Activated CD4-positive, alpha-beta memory T cell treated with anti-CD3 and anti-CD28 coated beads, Interleukin-2, amount 10 ng/mL, durations not matched to agents 7 days and 5 days (primary cell): ENCODE measurements at regions of chr11 and their contacts with region 1.

Region 1: GRCh38 chr11:66438504-66439466 is at the start of gene MRPL11:
- DNase-seq: peak; percentile 91
- H3K4me3 Mint-ChIP-seq: peak within 1 kb of the TSS; percentile 88
- H3K27ac Mint-ChIP-seq: peak within 1 kb of the TSS; percentile 89
- H3K4me1 Mint-ChIP-seq: peaks cover 24% of the 10 kb centered on the region
- H3K27me3 Mint-ChIP-seq: no peaks in the 10 kb centered on the region
- total RNA-seq, gene MRPL11: 44.2 to 55.3 TPM

Region 2: GRCh38 chr11:66386171-66387069 is 52.4 kb before region 1 on chr11:
- CTCF ChIA-PET with region 1: interaction called, 14 read pairs
- POLR2A ChIA-PET with region 1: no interaction called
- DNase-seq: peak; percentile 83
- H3K4me3 Mint-ChIP-seq: peak overlapping the region; percentile 12
- H3K27ac Mint-ChIP-seq: no peak overlapping the region
- H3K4me1 Mint-ChIP-seq: peaks cover 6% of the 10 kb centered on the region
- H3K27me3 Mint-ChIP-seq: peaks cover 7% of the 10 kb centered on the region

Region 3: DNA sequence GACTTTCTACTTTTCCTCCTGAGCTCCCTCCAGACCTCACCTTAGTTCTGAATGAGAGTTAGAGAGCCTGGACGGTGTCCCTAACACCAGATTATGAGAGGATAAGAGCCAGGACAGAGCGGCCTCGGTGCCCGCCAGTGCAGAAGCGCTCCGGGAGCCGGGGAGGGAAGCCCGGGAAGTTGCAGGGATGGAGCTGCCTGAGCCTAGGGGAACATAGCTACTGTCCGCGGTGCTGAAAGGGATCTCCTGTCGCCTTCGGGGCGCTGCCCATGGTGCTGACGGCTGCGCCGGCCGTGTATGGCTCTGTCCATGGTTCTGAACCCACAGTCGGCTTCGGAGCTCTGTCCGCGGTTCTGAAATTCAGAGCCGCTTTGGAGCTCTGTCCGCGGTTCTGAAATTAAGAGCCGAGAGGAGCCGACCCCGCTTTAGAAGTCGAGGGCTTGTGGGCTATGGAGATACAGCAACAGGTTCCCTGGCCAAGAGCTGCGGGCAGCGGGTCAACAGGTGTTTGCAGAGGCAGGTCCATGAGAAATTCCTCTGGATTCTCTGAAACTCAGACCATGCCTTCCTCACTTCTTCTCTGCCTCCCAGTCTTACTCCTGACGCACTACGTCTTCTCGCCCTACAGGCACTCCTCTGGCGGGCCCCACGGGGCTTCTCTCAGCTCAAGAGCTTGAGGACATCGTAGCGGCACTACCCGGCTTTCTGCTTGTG is 17.1 kb before region 1 on chr11:
- CTCF ChIA-PET with region 1: interaction called, 15 read pairs
- POLR2A ChIA-PET with region 1: interaction called, 12 read pairs
- DNase-seq: peak; percentile 90
- H3K4me3 Mint-ChIP-seq: no peak overlapping the region
- H3K27ac Mint-ChIP-seq: no peak overlapping the region
- H3K4me1 Mint-ChIP-seq: peaks cover 17% of the 10 kb centered on the region
- H3K27me3 Mint-ChIP-seq: peaks cover 31% of the 10 kb centered on the region

Region 4: GRCh38 chr11:66466225-66467027 is 27.6 kb after region 1 on chr11 and contains the start of gene PELI3:
- CTCF ChIA-PET with region 1: interaction called, 16 read pairs
- POLR2A ChIA-PET with region 1: interaction called, 17 read pairs
- DNase-seq: peak; percentile 94
- H3K4me3 Mint-ChIP-seq: peak within 1 kb of the TSS; percentile 87
- H3K27ac Mint-ChIP-seq: peak within 1 kb of the TSS; percentile 36
- H3K4me1 Mint-ChIP-seq: peaks cover 36% of the 10 kb centered on the region
- H3K27me3 Mint-ChIP-seq: no peaks in the 10 kb centered on the region
- total RNA-seq, gene PELI3: 6.8 to 7.5 TPM

Region 5: GRCh38 chr11:66842896-66843775 is 404.4 kb after region 1 on chr11 and contains the start of gene RCE1:
- CTCF ChIA-PET with region 1: interaction called, 4 read pairs
- POLR2A ChIA-PET with region 1: interaction called, 10 read pairs
- DNase-seq: peak; percentile 93
- H3K4me3 Mint-ChIP-seq: peak within 1 kb of the TSS; percentile 93
- H3K27ac Mint-ChIP-seq: peak within 1 kb of the TSS; percentile 93
- H3K4me1 Mint-ChIP-seq: peaks cover 58% of the 10 kb centered on the region
- H3K27me3 Mint-ChIP-seq: no peaks in the 10 kb centered on the region
- total RNA-seq, gene RCE1: 21.2 to 22.0 TPM